ENCODE measurements at regions of chr2 and their contacts with region 1.

Region 1: DNA sequence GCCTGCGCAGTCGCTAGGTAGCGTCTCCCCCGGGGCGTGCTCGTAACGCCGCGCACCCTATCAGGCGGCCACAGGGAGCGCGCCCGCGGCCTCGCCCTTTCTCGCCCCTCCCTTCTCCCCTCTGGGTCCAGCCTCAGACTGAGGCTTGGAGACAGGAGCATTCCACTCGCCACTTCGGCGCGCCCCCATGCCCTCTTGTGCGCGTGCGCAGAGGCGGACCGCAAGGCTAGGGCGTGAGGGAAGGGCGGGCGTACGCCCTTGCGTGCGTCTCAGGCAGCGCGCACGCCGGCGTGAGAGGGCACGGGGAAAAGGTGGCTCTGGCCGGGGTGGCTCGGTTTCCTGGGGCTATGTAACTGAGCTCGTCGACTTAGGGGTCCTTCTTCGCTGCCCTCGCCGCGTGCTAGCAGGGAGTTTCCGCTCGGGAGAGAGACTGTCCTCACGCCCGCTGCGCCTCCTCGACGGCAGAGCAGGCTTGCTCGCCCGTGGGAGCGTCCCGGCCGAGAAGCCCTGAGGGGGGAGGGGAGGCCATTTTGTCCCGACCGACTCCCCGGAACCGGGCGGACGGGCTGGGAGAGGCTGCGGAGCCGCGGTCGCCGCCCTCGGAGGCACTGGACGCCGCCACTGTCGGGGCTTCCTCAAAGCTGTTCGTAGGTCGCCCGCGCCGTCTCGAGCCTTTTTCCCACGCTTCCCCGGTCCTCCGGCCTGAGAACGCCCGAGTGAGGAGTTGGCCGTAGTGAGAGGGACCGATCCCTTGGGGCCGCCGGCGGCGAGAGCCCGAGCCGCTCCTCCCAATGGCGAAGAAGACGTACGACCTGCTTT is at the start of gene RAB10:
- DNase-seq: peak; percentile 98
- ATAC-seq: peak; percentile 89
- H3K4me3 ChIP-seq: peak within 1 kb of the TSS; percentile 98
- H3K27ac ChIP-seq: peak within 1 kb of the TSS; percentile 95
- H3K4me1 ChIP-seq: peaks cover 3% of the 10 kb centered on the region; the same call in 1 of the 2 replicates
- H3K27me3 ChIP-seq: no peaks in the 10 kb centered on the region
- CTCF ChIP-seq: no peak
- EP300 ChIP-seq: no peak
- POLR2A ChIP-seq: peak; percentile 98
- RAD21 ChIP-seq: no peak
- polyA plus RNA-seq, gene RAB10: 13.3 to 24.8 TPM

Region 2: GRCh38 chr2:25960920-25961319 is 73.1 kb before region 1 on chr2:
- CTCF ChIA-PET with region 1: no interaction called
- POLR2A ChIA-PET with region 1: no interaction called
- RAD21 ChIA-PET with region 1: no interaction called
- SMC1A ChIA-PET with region 1: no interaction called
- in situ Hi-C with region 1: no loop called
- intact Hi-C with region 1: no loop called
- DNase-seq: no peak
- ATAC-seq: peak; percentile 31; the same call in 2 of the 3 replicates
- H3K4me3 ChIP-seq: no peak overlapping the region
- H3K27ac ChIP-seq: no peak overlapping the region
- H3K4me1 ChIP-seq: no peaks in the 10 kb centered on the region
- H3K27me3 ChIP-seq: no peaks in the 10 kb centered on the region; a peak in 1 of 4 replicates
- CTCF ChIP-seq: no peak
- EP300 ChIP-seq: no peak
- POLR2A ChIP-seq: no peak
- RAD21 ChIP-seq: no peak

Region 3: GRCh38 chr2:26043862-26044696 is 10.1 kb after region 1 on chr2:
- CTCF ChIA-PET with region 1: interaction called, 3 read pairs
- POLR2A ChIA-PET with region 1: interaction called, 7 read pairs
- RAD21 ChIA-PET with region 1: interaction called, 5 read pairs
- SMC1A ChIA-PET with region 1: interaction called, 11 read pairs
- in situ Hi-C with region 1: no loop called
- intact Hi-C with region 1: no loop called
- DNase-seq: no peak
- ATAC-seq: peak; percentile 86
- H3K4me3 ChIP-seq: peak overlapping the region; percentile 55; the same call in 1 of the 2 replicates
- H3K27ac ChIP-seq: peak overlapping the region; percentile 76
- H3K4me1 ChIP-seq: peaks cover 6% of the 10 kb centered on the region; the same call in 1 of the 2 replicates
- H3K27me3 ChIP-seq: no peaks in the 10 kb centered on the region
- CTCF ChIP-seq: no peak
- EP300 ChIP-seq: no peak
- POLR2A ChIP-seq: no peak
- RAD21 ChIP-seq: no peak

Region 4: GRCh38 chr2:26068602-26069298 is 34.7 kb after region 1 on chr2:
- CTCF ChIA-PET with region 1: interaction called, 7 read pairs
- POLR2A ChIA-PET with region 1: interaction called, 10 read pairs
- RAD21 ChIA-PET with region 1: interaction called, 6 read pairs
- SMC1A ChIA-PET with region 1: interaction called, 9 read pairs
- in situ Hi-C with region 1: no loop called
- intact Hi-C with region 1: no loop called
- DNase-seq: peak; percentile 84
- ATAC-seq: peak; percentile 96
- H3K4me3 ChIP-seq: peak overlapping the region; percentile 51; the same call in 1 of the 2 replicates
- H3K27ac ChIP-seq: peak overlapping the region; percentile 59
- H3K4me1 ChIP-seq: peaks cover 28% of the 10 kb centered on the region
- H3K27me3 ChIP-seq: no peaks in the 10 kb centered on the region
- CTCF ChIP-seq: no peak
- EP300 ChIP-seq: peak in 1 of 2 experiments; percentile 80; a peak in 2 of 4 replicates
- POLR2A ChIP-seq: no peak
- RAD21 ChIP-seq: no peak

Measured in GM12878 (cell line).